Activated naive CD4-positive, alpha-beta T cell treated with anti-CD3 and anti-CD28 coated beads for 36 hours (primary cell): ENCODE measurements at regions of chr13 and their contacts with region 1.

Region 1: DNA sequence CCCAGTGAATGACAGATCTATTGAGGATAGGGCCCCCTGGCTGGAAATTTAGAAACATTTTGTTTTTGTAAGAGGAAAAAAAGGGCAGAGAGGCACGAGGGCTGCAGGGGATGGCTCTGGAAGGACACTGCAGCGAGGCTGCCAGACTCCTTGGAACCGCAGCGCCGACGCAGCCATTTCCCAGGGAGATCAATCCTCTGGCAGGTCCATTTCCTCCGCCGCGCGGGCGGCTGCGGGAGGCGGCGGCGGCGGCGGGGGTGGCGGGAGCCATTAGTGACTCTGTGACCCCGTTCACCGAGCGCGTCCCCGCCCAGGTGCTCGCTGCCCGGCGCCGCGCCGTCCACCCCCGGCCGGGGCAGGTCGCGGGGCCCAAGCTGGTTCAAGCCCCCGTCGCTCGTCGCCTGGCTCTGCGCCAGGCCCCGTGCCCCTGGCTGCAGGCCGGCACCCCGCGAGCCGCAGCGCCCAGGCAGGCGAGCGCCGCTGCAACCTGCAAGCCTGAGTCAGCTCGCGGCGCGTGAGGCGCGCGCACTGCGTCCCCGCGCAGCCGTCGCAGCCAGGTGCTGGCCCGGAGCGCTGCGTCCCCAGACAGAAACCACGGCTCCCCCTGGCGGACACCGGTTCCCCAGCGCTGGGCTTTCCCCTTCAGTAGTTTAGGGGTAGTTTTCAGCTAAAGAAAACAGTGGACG is 192.6 kb downstream of the KATNAL1 start:
- DNase-seq: peak; percentile 94
- H3K4me3 Mint-ChIP-seq: peak overlapping the region; percentile 69
- H3K27ac Mint-ChIP-seq: no peak overlapping the region
- H3K4me1 Mint-ChIP-seq: peaks cover 36% of the 10 kb centered on the region
- H3K27me3 Mint-ChIP-seq: no peaks in the 10 kb centered on the region

Region 2: DNA sequence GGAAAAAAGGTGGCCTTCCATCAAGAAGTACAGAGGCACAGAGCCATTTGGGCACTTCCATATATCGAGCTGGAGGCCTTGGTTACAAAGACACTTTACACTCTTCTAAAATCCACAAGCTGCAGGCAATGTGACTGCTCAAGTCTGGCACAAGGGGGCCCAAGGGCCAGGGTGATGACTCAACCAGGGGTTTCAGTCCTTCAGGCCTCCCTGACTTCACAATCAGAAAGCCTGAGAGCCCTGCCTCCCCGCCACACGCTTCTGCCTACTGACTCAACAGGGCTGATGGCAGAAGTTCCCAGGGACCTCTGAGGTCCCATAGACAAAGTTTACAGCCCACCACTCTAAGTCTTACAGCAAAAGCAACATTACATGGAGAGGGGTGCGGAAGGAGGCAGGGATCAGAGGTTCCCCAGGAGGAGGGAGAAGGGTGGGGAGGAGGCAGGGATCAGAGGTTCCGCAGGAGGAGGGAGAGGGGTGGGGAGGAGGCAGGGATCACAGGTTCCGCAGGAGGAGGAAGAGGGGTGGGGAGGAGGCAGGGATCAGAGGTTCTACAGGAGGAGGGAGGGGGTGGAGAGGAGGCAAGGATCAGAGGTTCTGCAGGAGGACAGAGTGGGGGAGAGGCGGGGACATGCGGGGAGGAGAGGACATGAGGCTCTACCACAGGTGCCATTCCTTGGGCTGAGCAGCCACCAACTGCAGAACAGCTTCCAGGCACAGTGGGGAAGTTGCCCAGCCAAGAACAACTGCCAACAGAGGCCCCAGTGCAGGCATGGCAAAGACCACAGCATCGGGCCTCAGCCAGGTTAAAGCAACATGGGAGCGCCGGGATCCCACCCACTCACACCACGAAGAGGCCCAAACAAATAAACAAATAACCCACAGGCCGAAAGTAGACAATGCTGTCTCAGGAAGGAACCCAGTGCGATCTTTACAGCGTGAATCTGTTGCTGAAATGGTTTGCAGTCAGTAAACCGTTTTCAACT is 571.2 kb before region 1 on chr13:
- CTCF ChIA-PET with region 1: no interaction called
- intact Hi-C with region 1: loop called (anchors 1 kb)
- DNase-seq: peak; percentile 74
- H3K4me3 Mint-ChIP-seq: no peak overlapping the region
- H3K27ac Mint-ChIP-seq: peak overlapping the region; percentile 41
- H3K4me1 Mint-ChIP-seq: peaks cover 55% of the 10 kb centered on the region
- H3K27me3 Mint-ChIP-seq: no peaks in the 10 kb centered on the region

Region 3: DNA sequence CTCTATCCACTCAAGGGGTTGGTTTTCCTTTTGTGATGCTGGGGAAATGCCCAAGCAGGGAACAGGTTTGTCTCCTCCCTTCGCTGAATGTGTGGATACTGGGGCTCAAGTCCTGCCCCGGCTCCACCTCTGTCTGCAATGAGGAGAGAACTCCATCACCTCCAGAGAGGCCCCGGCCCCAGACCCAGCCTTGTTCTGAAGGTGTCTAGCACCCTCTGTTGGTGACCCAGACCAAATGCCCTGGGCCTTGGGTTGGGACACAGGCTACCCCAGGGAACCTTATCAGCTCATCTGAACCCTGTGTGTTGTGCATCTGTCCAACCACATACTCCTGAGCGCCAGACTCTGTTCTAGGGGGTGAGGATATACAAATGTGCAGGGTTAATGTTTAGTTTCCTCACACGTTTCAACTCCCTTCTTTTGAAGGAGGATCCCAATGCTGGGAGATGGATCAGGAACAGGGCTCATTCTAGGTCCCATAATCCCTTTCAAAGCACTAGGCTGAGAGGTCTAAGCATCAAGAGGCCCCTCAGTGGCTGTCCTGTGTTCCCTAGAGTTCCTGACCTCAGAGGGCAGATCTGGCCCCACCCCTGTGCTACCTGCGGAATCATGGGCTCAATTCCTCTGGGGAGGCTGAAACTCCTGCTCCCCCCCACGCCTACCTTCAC is 406.7 kb before region 1 on chr13:
- CTCF ChIA-PET with region 1: no interaction called
- intact Hi-C with region 1: loop called (anchors 5 kb)
- DNase-seq: peak; percentile 68
- H3K4me3 Mint-ChIP-seq: no peak overlapping the region
- H3K27ac Mint-ChIP-seq: no peak overlapping the region
- H3K4me1 Mint-ChIP-seq: no peaks in the 10 kb centered on the region
- H3K27me3 Mint-ChIP-seq: peaks cover 7% of the 10 kb centered on the region

Region 4: GRCh38 chr13:29771247-29771646 is 343.5 kb before region 1 on chr13:
- CTCF ChIA-PET with region 1: interaction called, 143 read pairs
- intact Hi-C with region 1: loop called (anchors 1 kb)
- DNase-seq: no peak
- H3K4me3 Mint-ChIP-seq: no peak overlapping the region
- H3K27ac Mint-ChIP-seq: no peak overlapping the region
- H3K4me1 Mint-ChIP-seq: peaks cover 2% of the 10 kb centered on the region
- H3K27me3 Mint-ChIP-seq: no peaks in the 10 kb centered on the region

Region 5: GRCh38 chr13:29978211-29978610 is 136.5 kb before region 1 on chr13:
- CTCF ChIA-PET with region 1: no interaction called
- intact Hi-C with region 1: no loop called
- DNase-seq: no peak
- H3K4me3 Mint-ChIP-seq: no peak overlapping the region
- H3K27ac Mint-ChIP-seq: no peak overlapping the region
- H3K4me1 Mint-ChIP-seq: no peaks in the 10 kb centered on the region
- H3K27me3 Mint-ChIP-seq: no peaks in the 10 kb centered on the region

Region 6: DNA sequence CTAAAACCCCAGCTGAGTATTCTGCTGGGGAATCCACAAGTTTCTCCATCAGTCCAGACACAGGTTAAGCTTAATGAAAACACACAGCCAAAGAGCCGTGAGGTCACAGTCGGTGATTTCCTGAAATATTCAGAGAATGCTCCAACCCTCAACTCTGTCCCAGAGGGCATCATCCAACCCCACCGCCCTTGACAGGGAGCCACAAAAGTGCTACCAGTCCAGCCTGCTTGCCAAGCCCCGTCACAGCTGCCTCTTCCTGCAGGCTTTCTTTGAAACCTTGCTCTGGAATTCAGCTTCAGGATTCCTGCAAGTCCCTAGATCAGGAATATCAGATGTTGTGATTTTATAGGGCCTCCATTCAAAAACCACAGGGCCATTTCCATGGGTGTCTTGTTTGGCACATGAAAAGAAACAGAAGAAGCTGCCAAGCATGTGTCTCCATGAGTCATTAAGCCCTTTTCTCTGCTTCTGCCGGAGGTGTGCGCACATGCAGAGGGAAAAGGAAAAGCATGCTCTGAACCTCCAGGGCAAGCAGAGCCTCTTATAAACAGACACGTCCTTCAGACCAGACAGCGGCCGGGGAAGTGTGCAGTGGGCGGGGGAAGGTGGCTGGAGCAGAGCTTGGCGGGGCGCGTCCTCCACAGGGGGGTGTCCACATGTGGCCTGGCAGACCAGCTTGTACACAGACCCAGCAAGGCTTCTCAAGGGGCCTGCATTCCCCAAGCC is 27.9 kb after region 1 on chr13:
- CTCF ChIA-PET with region 1: interaction called, 11 read pairs
- intact Hi-C with region 1: no loop called
- DNase-seq: peak; percentile 63
- H3K4me3 Mint-ChIP-seq: no peak overlapping the region
- H3K27ac Mint-ChIP-seq: peak overlapping the region; percentile 37
- H3K4me1 Mint-ChIP-seq: peaks cover 55% of the 10 kb centered on the region
- H3K27me3 Mint-ChIP-seq: no peaks in the 10 kb centered on the region

Region 7: DNA sequence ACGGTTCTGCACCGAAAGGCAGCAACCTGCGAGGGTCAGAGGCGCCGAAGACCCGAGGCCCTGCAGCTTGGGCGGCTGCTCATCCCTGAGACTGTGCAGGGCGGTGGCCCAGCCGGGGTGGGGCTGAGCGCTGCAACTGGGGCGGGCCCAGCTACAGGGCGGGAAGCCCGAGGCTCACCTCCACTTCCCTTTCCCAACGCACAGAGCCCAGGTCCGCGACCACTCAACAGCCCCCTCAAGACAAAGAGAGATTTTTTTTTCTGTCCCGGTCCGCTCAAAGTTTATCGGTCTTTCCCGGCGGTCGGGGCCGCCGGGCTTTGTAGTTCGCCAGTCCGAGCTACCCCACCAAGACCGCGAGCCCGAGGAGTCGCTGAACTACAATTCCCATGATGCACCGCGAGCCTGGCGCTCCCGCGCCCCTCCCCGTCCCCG is 192.1 kb after region 1 on chr13:
- CTCF ChIA-PET with region 1: interaction called, 3 read pairs
- intact Hi-C with region 1: loop called (anchors 5 kb)
- DNase-seq: peak; percentile 94
- H3K4me3 Mint-ChIP-seq: peak overlapping the region; percentile 83
- H3K27ac Mint-ChIP-seq: peak overlapping the region; percentile 76
- H3K4me1 Mint-ChIP-seq: peaks cover 14% of the 10 kb centered on the region
- H3K27me3 Mint-ChIP-seq: no peaks in the 10 kb centered on the region